Endothelial cell of umbilical vein (primary cell): ENCODE measurements at regions of chr5 and their contacts with region 1.

Region 1: DNA sequence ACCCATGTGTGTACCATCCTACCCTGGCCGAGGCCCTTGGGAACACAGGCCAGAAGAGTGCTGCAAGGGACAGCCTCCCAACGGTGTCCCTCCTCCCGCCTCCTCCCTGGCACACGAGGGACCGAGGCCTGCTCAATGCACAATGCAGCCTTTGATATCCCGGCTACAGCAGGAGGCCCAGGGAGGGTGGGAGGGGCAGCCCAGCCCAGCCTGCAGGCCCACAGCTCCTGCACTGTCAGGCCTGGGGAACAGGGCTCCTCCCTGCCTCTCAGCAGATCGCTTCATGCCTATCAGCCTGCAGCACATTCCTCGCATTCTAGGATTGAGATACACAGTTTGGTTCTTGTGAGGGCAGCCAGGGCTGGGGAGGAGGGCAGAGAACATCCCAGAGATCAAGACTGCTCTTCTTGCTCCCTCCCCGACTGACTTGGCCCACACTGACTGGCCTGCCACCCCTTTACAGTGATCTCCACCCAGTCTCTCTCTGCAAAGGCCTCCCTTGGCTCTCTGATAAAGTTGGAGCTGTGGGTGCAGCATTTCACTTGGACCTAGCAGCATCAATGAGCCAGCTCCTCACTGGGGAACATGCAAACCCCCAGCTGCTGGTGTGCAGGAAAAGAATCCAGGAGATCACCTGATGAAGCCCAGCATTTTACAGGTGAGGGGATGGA is at the start of gene SH3TC2:
- DNase-seq: peak; percentile 28
- H3K4me3 ChIP-seq: no peak within 1 kb of the TSS
- H3K27ac ChIP-seq: peak within 1 kb of the TSS; percentile 97
- H3K4me1 ChIP-seq: peaks cover 39% of the 10 kb centered on the region
- H3K27me3 ChIP-seq: no peaks in the 10 kb centered on the region
- CTCF ChIP-seq: no peak
- POLR2A ChIP-seq: peak; percentile 18
- total RNA-seq, gene SH3TC2: 3.3 and 4.3 TPM in 2 replicates

Region 2: DNA sequence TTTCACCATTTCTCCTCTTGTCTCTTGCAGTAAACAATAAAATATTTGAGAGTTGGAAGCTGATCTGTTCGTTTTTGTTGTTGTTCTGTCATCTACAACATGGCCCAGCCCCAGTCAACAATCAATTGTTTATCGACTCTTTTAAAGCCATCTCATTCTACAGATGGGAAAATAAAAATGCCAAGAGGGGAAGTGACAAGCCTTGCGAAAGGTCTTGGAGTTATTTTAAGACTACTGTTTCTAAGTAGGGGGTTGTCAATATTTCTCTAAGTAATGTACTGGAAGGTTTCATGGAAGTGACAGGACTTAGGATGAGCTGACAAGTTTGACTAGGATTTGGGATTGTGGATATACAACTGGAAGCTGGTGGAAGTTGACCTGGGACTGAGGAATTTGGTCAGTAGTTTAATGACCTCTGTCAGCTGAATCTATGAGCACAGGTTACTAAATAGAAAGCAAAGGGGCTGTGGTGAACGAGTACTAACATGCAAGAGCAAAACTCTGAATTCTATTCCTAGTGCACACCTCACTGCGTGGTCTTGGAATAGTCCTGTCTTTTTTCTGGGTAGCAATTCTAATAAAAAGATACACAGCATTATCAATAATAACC is 294.2 kb before region 1 on chr5:
- CTCF ChIA-PET with region 1: no interaction called
- POLR2A ChIA-PET with region 1: no interaction called
- dilution Hi-C with region 1: no loop called
- intact Hi-C with region 1: no loop called
- DNase-seq: no peak
- H3K4me3 ChIP-seq: no peak overlapping the region
- H3K27ac ChIP-seq: no peak overlapping the region
- H3K4me1 ChIP-seq: no peaks in the 10 kb centered on the region
- H3K27me3 ChIP-seq: peaks cover 2 to 4% of the 10 kb centered on the region in 2 experiments
- CTCF ChIP-seq: no peak
- POLR2A ChIP-seq: no peak

Region 3: DNA sequence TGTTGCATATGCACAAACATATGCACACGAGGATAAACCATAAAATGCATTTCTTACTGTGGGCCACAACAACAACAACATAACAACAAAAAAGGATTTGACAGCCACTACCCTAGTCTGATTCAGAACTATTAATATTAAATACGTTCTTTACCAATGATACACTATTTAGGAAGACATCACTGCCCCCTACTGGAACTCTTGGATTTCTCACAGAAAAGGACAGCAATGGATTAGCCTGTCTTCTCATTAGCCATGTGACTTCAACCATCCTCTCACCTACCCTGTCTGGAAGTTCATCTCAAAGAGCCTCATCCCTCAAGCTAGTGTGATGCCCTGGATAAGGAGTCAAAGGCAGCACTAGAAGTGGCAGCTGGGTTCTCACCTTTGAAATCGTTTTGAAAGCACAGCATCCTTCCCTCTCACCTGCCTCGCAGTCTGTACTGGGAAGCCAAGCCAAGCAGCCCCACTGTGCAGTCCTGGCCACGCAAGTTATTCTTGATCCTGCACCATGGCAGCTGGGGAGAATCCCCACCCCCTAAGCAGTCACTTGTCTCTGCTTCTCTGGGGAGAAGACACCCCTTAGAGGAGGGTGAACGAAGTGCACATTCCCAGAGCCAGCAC is 64.9 kb before region 1 on chr5:
- CTCF ChIA-PET with region 1: no interaction called
- POLR2A ChIA-PET with region 1: no interaction called
- dilution Hi-C with region 1: no loop called
- intact Hi-C with region 1: no loop called
- DNase-seq: peak; percentile 68
- H3K4me3 ChIP-seq: no peak overlapping the region
- H3K27ac ChIP-seq: no peak overlapping the region
- H3K4me1 ChIP-seq: peaks cover 13% of the 10 kb centered on the region
- H3K27me3 ChIP-seq: no peaks in the 10 kb centered on the region
- CTCF ChIP-seq: peak; percentile 54 to 62
- POLR2A ChIP-seq: no peak

Region 4: DNA sequence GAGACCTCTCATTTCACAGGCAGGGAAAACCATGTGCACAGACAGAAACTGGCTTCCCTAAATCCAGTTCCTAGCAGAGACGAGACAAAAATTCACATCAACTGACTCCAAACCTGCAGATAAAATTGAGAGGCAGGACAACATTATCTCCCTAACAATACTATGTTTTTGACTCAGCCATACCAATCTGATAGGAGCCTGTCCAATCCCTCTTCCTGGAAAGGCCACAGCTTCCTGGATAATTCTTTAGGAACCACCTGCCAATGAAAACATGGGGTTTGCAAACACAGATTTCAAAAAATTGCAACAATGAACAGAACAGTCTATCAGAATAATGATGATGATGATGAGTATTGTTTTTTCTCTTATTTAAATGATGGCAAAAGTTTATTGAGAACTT is 22.7 kb before region 1 on chr5:
- CTCF ChIA-PET with region 1: interaction called, 8 read pairs
- POLR2A ChIA-PET with region 1: no interaction called
- dilution Hi-C with region 1: no loop called
- intact Hi-C with region 1: loop called (anchors 1 kb)
- DNase-seq: peak; percentile 83
- H3K4me3 ChIP-seq: no peak overlapping the region
- H3K27ac ChIP-seq: peak overlapping the region; percentile 57
- H3K4me1 ChIP-seq: peaks cover 57% of the 10 kb centered on the region
- H3K27me3 ChIP-seq: no peaks in the 10 kb centered on the region
- CTCF ChIP-seq: no peak
- POLR2A ChIP-seq: peak; percentile 60

Region 5: DNA sequence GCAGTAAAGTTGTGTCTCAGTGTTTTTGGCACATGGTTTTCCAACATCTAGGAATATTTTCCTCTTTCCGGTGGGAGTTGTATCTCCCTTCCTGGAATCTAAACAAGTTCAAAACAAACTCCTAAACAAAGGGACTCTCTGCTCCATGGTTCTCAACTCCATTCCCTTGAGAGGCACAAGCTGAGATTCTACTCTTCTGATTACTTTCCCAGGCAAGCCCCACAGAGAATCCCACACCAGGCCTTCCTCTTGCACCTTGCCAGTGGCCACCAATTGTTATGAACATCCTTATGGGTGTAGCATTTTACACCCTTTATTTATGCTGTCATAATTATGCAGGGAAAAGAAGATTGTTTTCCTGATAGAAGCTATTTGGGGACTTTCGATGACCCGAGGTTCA is 25.5 kb after region 1 on chr5:
- CTCF ChIA-PET with region 1: no interaction called
- POLR2A ChIA-PET with region 1: no interaction called
- dilution Hi-C with region 1: no loop called
- intact Hi-C with region 1: no loop called
- DNase-seq: no peak
- H3K4me3 ChIP-seq: no peak overlapping the region
- H3K27ac ChIP-seq: no peak overlapping the region
- H3K4me1 ChIP-seq: no peaks in the 10 kb centered on the region
- H3K27me3 ChIP-seq: no peaks in the 10 kb centered on the region
- CTCF ChIP-seq: no peak
- POLR2A ChIP-seq: no peak

Region 6: GRCh38 chr5:149133795-149134780 is 70.9 kb after region 1 on chr5:
- CTCF ChIA-PET with region 1: no interaction called
- POLR2A ChIA-PET with region 1: no interaction called
- dilution Hi-C with region 1: no loop called
- intact Hi-C with region 1: loop called (anchors 1 kb)
- DNase-seq: peak; percentile 79
- H3K4me3 ChIP-seq: no peak overlapping the region
- H3K27ac ChIP-seq: peak overlapping the region; percentile 96
- H3K4me1 ChIP-seq: peaks cover 36% of the 10 kb centered on the region
- H3K27me3 ChIP-seq: no peaks in the 10 kb centered on the region
- CTCF ChIP-seq: no peak
- POLR2A ChIP-seq: no peak